ENCODE measurements at regions of chr1 and their contacts with region 1.

Region 1: DNA sequence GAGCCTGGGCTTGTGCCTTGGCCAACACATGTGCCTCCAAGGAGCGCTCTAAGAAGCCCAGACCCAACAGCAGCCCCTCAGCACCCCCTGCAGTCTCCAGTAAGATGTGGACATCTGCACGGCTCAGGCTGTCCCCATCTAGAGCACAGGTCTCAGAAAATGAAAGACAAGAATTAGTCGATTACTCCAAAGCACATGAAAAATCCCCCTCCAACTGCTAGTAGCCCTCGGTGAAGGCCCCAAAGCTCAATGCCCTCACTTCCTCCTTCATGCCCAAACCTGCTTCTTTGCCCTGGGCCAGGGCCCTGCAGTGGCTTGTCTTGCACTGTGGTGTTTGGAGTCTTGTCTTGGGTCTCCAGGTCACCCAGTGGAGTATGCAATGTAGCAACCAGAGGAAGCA is 21.9 kb upstream of the ERO1B start:
- DNase-seq: peak; percentile 62
- CTCF ChIP-seq: peak; percentile 19

Region 2: GRCh38 chr1:236282425-236282716 is 21.3 kb before region 1 on chr1:
- CTCF ChIA-PET with region 1: interaction called, 13 read pairs
- POLR2A ChIA-PET with region 1: no interaction called
- DNase-seq: peak; percentile 21
- CTCF ChIP-seq: no peak

Region 3: DNA sequence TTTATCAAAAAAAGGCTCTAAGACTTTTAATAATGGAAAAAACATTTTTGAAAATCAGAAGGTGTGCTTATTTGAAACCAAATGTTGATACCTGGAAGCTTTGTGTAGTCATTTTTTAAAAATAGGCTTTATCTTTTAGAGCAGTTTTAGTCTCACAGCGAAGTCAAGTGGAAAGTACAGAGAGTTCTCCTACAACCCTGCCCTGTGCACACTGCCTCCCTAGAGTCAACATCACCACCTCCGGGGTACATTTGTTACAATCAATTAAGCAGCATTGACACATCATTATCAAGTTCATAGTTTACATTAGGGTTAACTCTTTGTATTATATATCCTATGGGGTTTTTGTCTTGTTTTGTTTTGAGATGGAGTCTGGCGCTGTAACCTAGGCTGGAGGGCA is 11.3 kb before region 1 on chr1:
- CTCF ChIA-PET with region 1: interaction called, 23 read pairs
- POLR2A ChIA-PET with region 1: no interaction called
- DNase-seq: no peak
- CTCF ChIP-seq: no peak

Region 4: DNA sequence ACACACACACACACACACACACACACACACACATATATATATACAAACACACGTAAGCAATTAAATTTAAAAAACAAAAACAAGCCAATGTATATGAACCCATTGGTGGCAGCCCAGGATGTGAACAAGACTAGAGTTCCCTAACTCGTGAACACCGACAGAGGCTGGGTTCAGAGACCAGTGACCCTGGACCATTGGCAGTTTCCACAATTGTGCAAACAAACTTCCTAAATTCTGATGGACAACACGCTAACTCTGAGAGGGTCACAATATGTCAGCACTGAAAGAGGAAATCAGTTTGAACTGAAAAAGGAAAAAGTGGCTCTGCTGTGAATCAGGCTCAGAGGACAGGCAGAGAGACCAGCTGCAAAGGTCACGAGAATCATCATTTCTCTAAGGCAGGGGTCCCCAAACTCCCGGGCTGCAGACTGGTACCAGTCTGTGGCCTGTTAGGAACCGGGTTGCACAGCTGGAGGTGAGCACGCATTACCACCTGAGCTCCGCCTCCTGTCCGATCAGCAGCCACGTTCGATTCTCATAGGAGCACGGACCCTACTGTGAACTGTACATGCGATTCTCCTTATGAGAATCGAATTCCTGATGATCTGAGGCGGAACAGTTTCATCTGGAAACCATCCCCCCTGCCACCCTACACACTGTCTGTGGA is 28.5 kb after region 1 on chr1:
- CTCF ChIA-PET with region 1: no interaction called
- POLR2A ChIA-PET with region 1: no interaction called
- DNase-seq: no peak
- CTCF ChIP-seq: no peak